CD8-positive, alpha-beta memory T cell (primary cell): ENCODE measurements at regions of chr22 and their contacts with region 1.

Region 1: GRCh38 chr22:38872172-38872830 is at the start of gene CBX6:
- DNase-seq: peak; percentile 92 to 95 (median 93)
- H3K4me3 ChIP-seq: peak within 1 kb of the TSS; percentile 95
- H3K4me3 Mint-ChIP-seq: peak within 1 kb of the TSS; percentile 84 to 95 (median 92)
- H3K27ac ChIP-seq: peak within 1 kb of the TSS; percentile 64
- H3K27ac Mint-ChIP-seq: peak within 1 kb of the TSS; percentile 85 to 99 (median 90)
- H3K4me1 ChIP-seq: peaks cover 44% of the 10 kb centered on the region
- H3K4me1 Mint-ChIP-seq: peaks cover 41 to 60% (median 50%) of the 10 kb centered on the region in 3 donors
- H3K27me3 ChIP-seq: no peaks in the 10 kb centered on the region
- H3K27me3 Mint-ChIP-seq: peaks cover 0 to 4% of the 10 kb centered on the region in 2 donors
- total RNA-seq, gene CBX6: 159 to 171 TPM

Region 2: DNA sequence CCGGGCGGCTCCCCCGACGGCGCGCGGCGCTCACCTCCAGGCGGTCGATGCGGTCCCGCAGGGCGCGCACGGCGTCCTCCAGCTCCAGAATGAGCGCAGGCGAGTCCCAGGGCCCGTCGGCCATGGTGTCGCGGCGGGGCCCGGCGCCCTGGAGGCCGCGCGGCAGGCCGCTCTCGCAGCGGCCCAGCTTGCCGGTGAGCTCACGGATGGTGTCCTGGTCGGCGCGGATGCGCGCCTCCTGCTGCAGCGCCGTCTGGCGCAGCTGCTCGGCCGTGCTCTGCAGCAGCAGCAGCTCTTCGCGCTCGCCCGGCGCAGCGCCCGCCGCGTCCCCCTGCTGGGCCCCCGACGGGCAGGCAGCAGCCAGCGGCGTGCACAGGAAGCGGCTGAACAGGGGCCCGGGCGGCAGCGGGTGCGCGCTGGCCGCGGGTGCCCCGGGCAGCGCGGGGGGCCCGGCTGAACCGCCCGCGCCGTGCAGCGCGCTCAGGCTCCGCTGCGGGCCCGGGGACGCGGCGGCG is 29.0 kb before region 1 on chr22:
- CTCF ChIA-PET with region 1: interaction called, 23 read pairs
- POLR2A ChIA-PET with region 1: interaction called, 8 read pairs
- DNase-seq: peak; percentile 18 to 78 (median 58)
- H3K4me3 ChIP-seq: peak overlapping the region; percentile 43
- H3K4me3 Mint-ChIP-seq: peak overlapping the region in 2 of 7 donors; percentile 31 to 84
- H3K27ac ChIP-seq: no peak overlapping the region
- H3K27ac Mint-ChIP-seq: no peak overlapping the region
- H3K4me1 ChIP-seq: peaks cover 20% of the 10 kb centered on the region
- H3K4me1 Mint-ChIP-seq: peaks cover 21 to 38% (median 34%) of the 10 kb centered on the region in 3 donors
- H3K27me3 ChIP-seq: no peaks in the 10 kb centered on the region
- H3K27me3 Mint-ChIP-seq: peaks cover 7 to 9% of the 10 kb centered on the region in 2 donors

Region 3: DNA sequence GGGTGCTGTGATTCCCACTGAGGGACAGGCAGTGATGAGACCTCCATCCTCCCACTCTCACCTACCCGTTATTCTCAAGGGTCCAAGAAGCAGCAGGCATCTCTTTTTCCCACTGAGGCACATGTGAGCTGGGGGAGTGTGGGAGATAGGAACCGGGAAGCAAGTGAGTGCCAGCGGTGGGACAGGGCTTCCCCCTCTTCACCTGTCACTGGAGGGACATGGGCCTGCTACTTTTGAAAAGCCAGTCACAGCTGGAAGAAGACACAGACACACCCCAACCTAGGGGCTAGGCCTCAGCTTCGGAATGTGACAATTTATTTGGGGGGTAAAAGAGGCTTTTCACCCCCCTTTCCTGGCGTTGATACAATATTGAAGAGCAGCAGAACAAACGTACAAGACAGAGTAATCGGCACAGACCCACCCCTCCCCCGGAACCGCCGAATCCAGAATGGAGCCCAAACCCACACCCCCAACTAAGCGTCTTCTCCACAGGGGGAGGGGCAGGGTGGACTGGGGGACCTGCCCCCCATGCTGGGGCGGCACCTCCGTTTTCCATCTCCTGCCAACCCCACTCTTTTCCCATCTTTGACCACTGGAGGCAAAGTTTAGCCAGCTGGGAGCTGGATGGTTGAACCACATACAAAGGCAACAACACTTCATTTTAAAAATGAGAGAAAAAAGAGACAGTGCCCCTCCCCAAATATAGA is 11.0 kb before region 1 on chr22:
- CTCF ChIA-PET with region 1: interaction called, 24 read pairs
- POLR2A ChIA-PET with region 1: interaction called, 3 read pairs
- DNase-seq: no peak
- H3K4me3 ChIP-seq: no peak overlapping the region
- H3K4me3 Mint-ChIP-seq: no peak overlapping the region
- H3K27ac ChIP-seq: no peak overlapping the region
- H3K27ac Mint-ChIP-seq: peak overlapping the region in 1 of 8 donors; percentile 36
- H3K4me1 ChIP-seq: no peaks in the 10 kb centered on the region
- H3K4me1 Mint-ChIP-seq: peaks cover 4 to 25% (median 5%) of the 10 kb centered on the region in 3 donors
- H3K27me3 ChIP-seq: no peaks in the 10 kb centered on the region
- H3K27me3 Mint-ChIP-seq: peaks cover 0 to 1% of the 10 kb centered on the region in 2 donors

Region 4: GRCh38 chr22:38973289-38974169 is 101.2 kb after region 1 on chr22:
- CTCF ChIA-PET with region 1: interaction called, 22 read pairs
- POLR2A ChIA-PET with region 1: no interaction called
- DNase-seq: peak; percentile 12 to 68 (median 24)
- H3K4me3 ChIP-seq: no peak overlapping the region
- H3K4me3 Mint-ChIP-seq: no peak overlapping the region
- H3K27ac ChIP-seq: no peak overlapping the region
- H3K27ac Mint-ChIP-seq: no peak overlapping the region
- H3K4me1 ChIP-seq: no peaks in the 10 kb centered on the region
- H3K4me1 Mint-ChIP-seq: peaks cover 2 to 5% (median 4%) of the 10 kb centered on the region in 3 donors
- H3K27me3 ChIP-seq: no peaks in the 10 kb centered on the region
- H3K27me3 Mint-ChIP-seq: peaks cover 12 to 14% of the 10 kb centered on the region in 2 donors